ENCODE measurements at regions of chr2 and their contacts with region 1.

Region 1: DNA sequence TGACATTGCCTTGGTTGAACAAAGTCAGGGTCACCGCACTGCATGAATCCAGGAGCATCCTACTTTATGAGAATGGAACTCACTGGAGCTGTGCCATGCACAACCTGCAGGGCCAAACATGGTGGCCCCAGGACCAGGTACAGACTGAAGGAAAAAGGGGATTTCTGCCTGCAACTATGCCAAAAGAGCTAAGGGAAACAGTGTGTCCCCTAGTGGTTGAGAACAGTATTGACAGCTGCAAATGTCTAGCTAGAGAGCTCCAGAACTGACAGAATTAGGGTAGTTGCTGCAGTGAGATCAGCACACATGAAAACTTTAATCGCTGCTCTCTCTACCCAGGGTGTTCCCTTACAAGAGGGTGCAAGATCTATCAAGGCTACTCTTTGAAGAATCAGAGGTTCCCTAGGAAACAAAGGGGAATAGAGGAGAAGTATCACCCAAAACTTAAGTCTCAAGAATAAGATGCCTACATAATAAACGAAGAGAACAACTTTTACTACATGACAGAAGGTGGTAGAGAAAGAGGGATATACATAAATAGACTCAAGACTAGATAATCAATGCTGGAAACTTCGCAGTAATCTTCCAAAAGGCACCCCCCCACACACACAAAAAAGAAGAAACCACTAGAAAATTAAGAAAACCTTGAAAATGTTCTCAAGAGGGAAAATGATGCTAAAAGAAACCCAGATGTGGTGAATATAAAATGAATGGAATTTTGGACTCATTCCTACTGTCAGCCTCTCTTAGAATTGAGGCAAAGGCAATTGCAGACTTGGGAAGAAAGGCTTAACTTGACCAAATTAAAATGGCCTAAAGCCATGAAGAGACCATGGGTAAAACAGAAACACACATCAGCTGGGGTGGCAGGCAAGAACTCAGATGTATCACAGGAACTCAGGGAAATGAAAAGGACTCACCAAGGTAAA is 43.6 kb upstream of the IHH start:
- DNase-seq: peak; percentile 28 to 60
- ATAC-seq: peak; percentile 88 to 95
- H3K4me3 ChIP-seq: no peak overlapping the region
- H3K27ac ChIP-seq: no peak overlapping the region
- H3K4me1 ChIP-seq: no peaks in the 10 kb centered on the region
- CTCF ChIP-seq: peak; percentile 64
- EP300 ChIP-seq: no peak
- POLR2A ChIP-seq: no peak
- RAD21 ChIP-seq: peak; percentile 41 to 47; a peak in 4 of 5 replicates

Region 2: DNA sequence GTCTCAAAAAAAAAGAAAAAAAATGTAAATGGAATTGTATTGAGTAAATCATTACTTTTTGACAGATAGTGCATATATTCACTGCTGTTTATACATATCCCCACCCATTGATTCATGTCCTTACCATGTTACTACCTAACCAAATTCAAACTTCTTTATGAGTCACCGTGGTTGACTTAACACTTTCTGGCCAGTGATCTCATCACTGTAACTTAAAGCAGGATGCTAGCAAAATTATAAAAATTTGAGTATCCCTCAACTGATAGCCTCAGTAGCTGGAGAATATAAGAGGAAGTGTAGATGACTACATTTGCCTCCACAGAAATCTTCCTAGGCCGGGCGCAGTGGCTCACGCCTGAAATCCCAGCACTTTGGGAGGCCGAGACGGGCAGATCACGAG is 522.3 kb before region 1 on chr2:
- CTCF ChIA-PET with region 1: no interaction called
- POLR2A ChIA-PET with region 1: no interaction called
- DNase-seq: peak in 1 of 2 experiments; percentile 31
- ATAC-seq: peak in 1 of 2 experiments; percentile 73; a peak in 4 of 6 replicates
- H3K4me3 ChIP-seq: no peak overlapping the region
- H3K27ac ChIP-seq: no peak overlapping the region
- H3K4me1 ChIP-seq: peaks cover 34% of the 10 kb centered on the region
- CTCF ChIP-seq: no peak
- EP300 ChIP-seq: no peak
- POLR2A ChIP-seq: no peak
- RAD21 ChIP-seq: no peak

Region 3: GRCh38 chr2:218814540-218815243 is 289.7 kb before region 1 on chr2:
- CTCF ChIA-PET with region 1: no interaction called
- POLR2A ChIA-PET with region 1: no interaction called
- DNase-seq: no peak
- ATAC-seq: no peak; a peak in 2 of 6 replicates
- H3K4me3 ChIP-seq: no peak overlapping the region
- H3K27ac ChIP-seq: no peak overlapping the region
- H3K4me1 ChIP-seq: no peaks in the 10 kb centered on the region
- CTCF ChIP-seq: no peak
- EP300 ChIP-seq: no peak
- POLR2A ChIP-seq: no peak
- RAD21 ChIP-seq: no peak

Region 4: DNA sequence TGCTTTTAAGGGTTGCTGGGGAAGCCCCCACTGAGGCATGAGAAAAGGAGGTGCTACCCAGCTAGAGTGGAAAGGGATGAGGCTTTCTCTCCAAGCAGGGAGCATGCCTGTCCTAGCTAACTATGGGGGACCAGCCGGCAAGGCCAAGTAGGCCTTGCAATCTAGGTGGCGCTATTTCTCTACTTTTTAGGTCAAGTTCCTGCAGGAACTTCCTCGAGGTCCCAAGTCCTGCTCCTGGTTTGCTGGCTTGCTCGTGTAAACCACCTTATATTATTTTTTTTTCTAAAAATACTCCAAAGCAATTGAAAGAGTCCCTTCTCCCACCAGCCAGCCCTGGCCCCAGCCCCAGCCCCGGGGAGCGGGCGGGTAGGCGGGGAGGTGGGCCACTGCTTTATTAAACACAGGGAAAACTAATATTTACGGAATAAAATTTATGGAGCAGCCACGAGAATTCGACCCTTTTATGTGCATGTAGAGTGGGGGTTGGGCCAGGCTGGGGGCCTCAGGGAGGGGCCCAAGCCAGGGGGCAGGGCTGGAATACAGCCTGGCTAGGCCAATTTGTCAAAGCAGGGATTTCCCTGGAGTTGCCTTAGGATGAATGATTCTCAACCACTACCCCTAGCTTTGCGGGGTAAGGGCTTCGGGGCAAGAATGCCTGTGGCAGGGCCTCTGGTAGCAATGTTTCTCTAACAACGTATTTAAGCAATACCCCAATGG is 30.8 kb before region 1 on chr2:
- CTCF ChIA-PET with region 1: interaction called, 10 read pairs
- POLR2A ChIA-PET with region 1: interaction called, 3 read pairs
- DNase-seq: peak; percentile 26 to 73
- ATAC-seq: peak; percentile 68 to 92; a peak in 4 of 6 replicates
- H3K4me3 ChIP-seq: no peak overlapping the region
- H3K27ac ChIP-seq: no peak overlapping the region
- H3K4me1 ChIP-seq: no peaks in the 10 kb centered on the region
- CTCF ChIP-seq: peak; percentile 65
- EP300 ChIP-seq: no peak
- POLR2A ChIP-seq: no peak
- RAD21 ChIP-seq: peak; percentile 59 to 63

Region 5: GRCh38 chr2:219079417-219079816 is 25.0 kb before region 1 on chr2:
- CTCF ChIA-PET with region 1: interaction called, 10 read pairs
- POLR2A ChIA-PET with region 1: interaction called, 3 read pairs
- DNase-seq: no peak
- ATAC-seq: no peak
- H3K4me3 ChIP-seq: no peak overlapping the region
- H3K27ac ChIP-seq: no peak overlapping the region
- H3K4me1 ChIP-seq: no peaks in the 10 kb centered on the region
- CTCF ChIP-seq: no peak
- EP300 ChIP-seq: no peak
- POLR2A ChIP-seq: no peak
- RAD21 ChIP-seq: no peak